Sigmoid colon (tissue), 7 donors: ENCODE measurements at regions of chr1 and their contacts with region 1.

Region 1: GRCh38 chr1:111399792-111400610 is 27.5 kb downstream of the OVGP1 start:
- DNase-seq: no peak
- H3K4me3 ChIP-seq: no peak overlapping the region
- H3K27ac ChIP-seq: no peak overlapping the region
- H3K4me1 ChIP-seq: no peaks in the 10 kb centered on the region
- H3K27me3 ChIP-seq: no peaks in the 10 kb centered on the region
- CTCF ChIP-seq: peak; percentile 32 to 63 (median 54)
- EP300 ChIP-seq: no peak
- POLR2A ChIP-seq: no peak

Region 2: DNA sequence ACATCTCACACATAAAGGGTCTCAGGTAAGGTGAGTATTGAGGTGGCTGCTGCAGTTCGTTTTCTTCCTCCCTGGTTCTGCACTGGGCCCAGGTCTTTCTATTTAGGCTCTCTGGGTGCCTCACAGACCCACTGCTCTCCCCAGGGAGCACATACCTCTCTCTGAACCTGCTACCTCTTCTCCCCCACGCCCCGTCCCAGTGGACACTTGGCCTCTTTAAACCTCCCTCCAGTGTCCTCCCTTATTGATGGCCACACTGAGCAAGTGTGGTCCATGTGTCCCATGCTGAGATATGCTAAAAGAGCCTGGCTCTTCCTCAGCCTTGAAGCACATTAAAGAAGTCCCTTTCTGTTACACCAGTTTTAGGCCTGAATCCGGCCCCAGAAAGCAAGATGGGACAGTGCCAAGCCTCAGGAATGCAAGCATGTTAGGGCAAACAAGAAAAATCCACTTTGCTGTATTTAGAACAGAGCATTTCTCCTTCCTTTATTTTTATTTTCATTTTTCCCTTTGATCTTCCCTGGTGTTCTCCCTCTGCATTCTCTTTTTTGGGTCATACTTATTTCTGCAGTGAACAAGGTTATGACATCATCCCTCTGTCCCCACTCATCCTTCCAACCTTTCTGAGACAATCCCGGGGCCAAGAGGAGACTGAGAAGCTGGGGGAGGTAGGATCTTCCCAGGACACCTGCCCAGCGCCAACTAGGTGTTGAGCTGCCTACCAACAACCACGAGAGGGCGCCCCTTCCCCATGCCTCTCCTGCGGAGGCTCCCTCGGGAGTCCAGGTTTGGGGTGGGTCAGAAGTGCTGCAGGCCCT is 177.5 kb before region 1 on chr1:
- intact Hi-C with region 1: loop called (anchors 1 kb)
- DNase-seq: peak; percentile 83
- H3K4me3 ChIP-seq: no peak overlapping the region
- H3K27ac ChIP-seq: no peak overlapping the region
- H3K4me1 ChIP-seq: peaks cover 0 to 8% (median 0%) of the 10 kb centered on the region in 4 donors
- H3K27me3 ChIP-seq: no peaks in the 10 kb centered on the region
- CTCF ChIP-seq: peak; percentile 69 to 91 (median 78)
- EP300 ChIP-seq: no peak
- POLR2A ChIP-seq: no peak

Region 3: GRCh38 chr1:111227851-111228747 is 171.9 kb before region 1 on chr1:
- intact Hi-C with region 1: loop called (anchors 1 kb)
- DNase-seq: no peak
- H3K4me3 ChIP-seq: no peak overlapping the region
- H3K27ac ChIP-seq: peak overlapping the region in 1 of 4 donors; percentile 28
- H3K4me1 ChIP-seq: no peaks in the 10 kb centered on the region
- H3K27me3 ChIP-seq: no peaks in the 10 kb centered on the region
- CTCF ChIP-seq: no peak
- EP300 ChIP-seq: no peak
- POLR2A ChIP-seq: no peak

Region 4: GRCh38 chr1:111789666-111790316 is 389.8 kb after region 1 on chr1:
- intact Hi-C with region 1: no loop called
- DNase-seq: no peak
- H3K4me3 ChIP-seq: no peak overlapping the region
- H3K27ac ChIP-seq: peak overlapping the region in 3 of 4 donors; percentile 26 to 43 (median 36)
- H3K4me1 ChIP-seq: peaks cover 0 to 9% (median 0%) of the 10 kb centered on the region in 4 donors
- H3K27me3 ChIP-seq: no peaks in the 10 kb centered on the region
- CTCF ChIP-seq: peak in 1 of 4 experiments; percentile 35
- EP300 ChIP-seq: peak in 1 of 4 donors; percentile 6
- POLR2A ChIP-seq: no peak